ENCODE measurements at regions of chr3 and their contacts with region 1.

Region 1: GRCh38 chr3:40580494-40581091 is 55.8 kb downstream of the ZNF621 start:
- DNase-seq: peak; percentile 77
- H3K4me3 Mint-ChIP-seq: no peak overlapping the region
- H3K27ac Mint-ChIP-seq: no peak overlapping the region
- H3K4me1 Mint-ChIP-seq: peaks cover 10% of the 10 kb centered on the region
- H3K27me3 Mint-ChIP-seq: peaks cover 10% of the 10 kb centered on the region
- CTCF ChIP-seq: peak; percentile 88

Region 2: DNA sequence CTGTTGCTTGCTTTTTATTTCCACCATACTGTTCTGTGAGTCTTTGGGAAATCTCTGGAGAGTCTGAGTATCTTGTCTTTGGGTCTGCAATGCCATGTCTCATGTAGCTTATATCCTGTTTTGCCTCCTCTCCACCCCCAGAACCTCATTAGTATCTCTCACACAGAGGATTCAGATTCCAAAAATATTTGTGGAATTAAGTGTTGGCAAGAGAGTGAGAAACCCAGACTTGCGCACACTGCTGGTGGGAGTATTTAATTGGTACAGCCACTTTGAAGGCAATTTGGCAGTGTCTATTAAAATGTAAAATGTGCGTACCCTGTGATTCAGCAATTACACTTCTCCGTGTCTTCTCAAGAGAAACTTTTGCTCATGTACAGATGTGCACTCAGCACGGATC is 12.8 kb after region 1 on chr3:
- CTCF ChIA-PET with region 1: interaction called, 10 read pairs
- POLR2A ChIA-PET with region 1: no interaction called
- intact Hi-C with region 1: no loop called
- DNase-seq: no peak
- H3K4me3 Mint-ChIP-seq: no peak overlapping the region
- H3K27ac Mint-ChIP-seq: no peak overlapping the region
- H3K4me1 Mint-ChIP-seq: peaks cover 5% of the 10 kb centered on the region
- H3K27me3 Mint-ChIP-seq: no peaks in the 10 kb centered on the region
- CTCF ChIP-seq: no peak

Region 3: GRCh38 chr3:40719660-40720287 is 139.2 kb after region 1 on chr3:
- CTCF ChIA-PET with region 1: interaction called, 19 read pairs
- POLR2A ChIA-PET with region 1: no interaction called
- intact Hi-C with region 1: loop called (anchors 5 kb)
- DNase-seq: peak; percentile 83
- H3K4me3 Mint-ChIP-seq: no peak overlapping the region
- H3K27ac Mint-ChIP-seq: no peak overlapping the region
- H3K4me1 Mint-ChIP-seq: peaks cover 17% of the 10 kb centered on the region
- H3K27me3 Mint-ChIP-seq: no peaks in the 10 kb centered on the region
- CTCF ChIP-seq: peak; percentile 51

Region 4: GRCh38 chr3:41716471-41716870 is 1135.9 kb after region 1 on chr3:
- CTCF ChIA-PET with region 1: interaction called, 13 read pairs
- POLR2A ChIA-PET with region 1: interaction called, 3 read pairs
- intact Hi-C with region 1: loop called (anchors 1 kb)
- DNase-seq: peak; percentile 9
- H3K4me3 Mint-ChIP-seq: no peak overlapping the region
- H3K27ac Mint-ChIP-seq: no peak overlapping the region
- H3K4me1 Mint-ChIP-seq: no peaks in the 10 kb centered on the region
- H3K27me3 Mint-ChIP-seq: no peaks in the 10 kb centered on the region
- CTCF ChIP-seq: no peak

Region 5: GRCh38 chr3:41881233-41881821 is 1300.7 kb after region 1 on chr3:
- CTCF ChIA-PET with region 1: interaction called, 139 read pairs
- POLR2A ChIA-PET with region 1: no interaction called
- intact Hi-C with region 1: loop called (anchors 1 kb)
- DNase-seq: peak; percentile 51
- H3K4me3 Mint-ChIP-seq: no peak overlapping the region
- H3K27ac Mint-ChIP-seq: no peak overlapping the region
- H3K4me1 Mint-ChIP-seq: no peaks in the 10 kb centered on the region
- H3K27me3 Mint-ChIP-seq: no peaks in the 10 kb centered on the region
- CTCF ChIP-seq: peak; percentile 79

Measured in MCF 10A (cell line).